Right cardiac atrium (tissue), 5 donors: ENCODE measurements at regions of chr3 and their contacts with region 1.

Region 1: DNA sequence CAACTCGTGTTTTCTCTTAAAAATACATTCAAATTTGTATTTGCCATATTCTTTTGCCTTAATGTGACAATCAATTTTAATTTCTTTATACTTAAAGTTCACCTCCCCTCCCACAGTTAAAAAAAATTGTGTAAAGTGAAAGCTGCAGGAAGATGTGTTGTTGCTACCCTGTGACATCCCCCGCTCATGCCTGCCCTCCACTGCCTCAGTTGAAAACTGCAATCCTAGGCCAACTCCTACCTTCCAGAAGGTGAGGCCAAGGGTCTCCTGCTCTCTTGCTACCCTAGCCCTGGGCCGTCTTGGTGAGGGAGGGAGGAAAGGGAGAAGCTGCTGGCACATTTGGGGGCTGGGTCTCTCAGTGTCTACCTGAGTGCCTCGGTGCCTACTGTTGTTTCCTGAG is 57.0 kb upstream of the CMTM7 start:
- DNase-seq: no peak
- ATAC-seq: no peak
- H3K4me3 ChIP-seq: no peak overlapping the region
- H3K27ac ChIP-seq: no peak overlapping the region
- H3K4me1 ChIP-seq: peaks cover 3% of the 10 kb centered on the region
- H3K27me3 ChIP-seq: no peaks in the 10 kb centered on the region

Region 2: DNA sequence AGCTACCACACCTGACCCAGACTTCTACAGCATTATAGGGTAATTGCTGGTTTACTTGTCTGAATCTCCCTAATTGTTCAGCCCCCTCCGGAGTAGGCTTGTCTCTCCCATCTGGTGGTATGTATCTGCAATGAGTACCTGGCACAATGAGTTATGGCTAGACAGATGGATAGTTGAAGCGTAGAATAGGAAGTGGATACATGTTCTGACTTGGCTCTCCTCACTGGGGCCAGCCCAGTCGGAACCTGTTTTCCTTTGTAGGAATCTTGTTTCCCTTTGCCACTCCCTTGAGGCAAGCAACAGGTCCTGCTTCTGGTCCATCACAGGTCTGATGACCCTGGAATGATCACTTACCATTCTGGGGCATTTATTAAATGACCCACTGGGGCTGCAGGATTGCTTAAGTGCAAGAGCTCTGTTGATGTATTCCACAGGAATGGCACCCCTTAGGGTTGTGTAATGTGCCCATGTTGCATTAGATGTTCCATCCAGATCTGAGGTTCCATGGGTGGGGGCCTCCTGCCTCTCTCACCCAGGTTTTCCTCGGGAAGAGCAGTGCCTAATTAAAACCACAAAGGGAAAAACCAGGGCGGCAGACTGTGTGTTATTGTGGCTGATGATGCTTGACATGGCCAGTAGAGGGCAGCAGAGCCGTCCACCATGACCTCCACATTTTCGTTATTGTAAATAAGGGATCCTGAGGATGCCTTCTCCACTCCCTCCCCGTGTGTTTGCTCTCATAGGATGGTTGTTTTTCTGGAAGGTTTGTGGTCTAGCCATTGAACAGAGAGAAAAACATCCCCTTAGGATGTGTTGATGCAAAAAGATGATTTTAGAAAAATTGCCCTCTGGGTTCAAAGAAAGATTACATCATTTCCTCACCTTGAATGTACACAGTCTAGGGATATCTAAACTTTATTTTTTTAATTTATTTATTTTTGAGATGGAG is 38.1 kb before region 1 on chr3:
- intact Hi-C with region 1: loop called in 1 of 4 experiments (anchors 5 kb)
- DNase-seq: peak; percentile 43 to 71 (median 64)
- ATAC-seq: peak; percentile 72 to 87
- H3K4me3 ChIP-seq: no peak overlapping the region
- H3K27ac ChIP-seq: no peak overlapping the region
- H3K4me1 ChIP-seq: no peaks in the 10 kb centered on the region
- H3K27me3 ChIP-seq: no peaks in the 10 kb centered on the region